CD8-positive, alpha-beta memory T cell (primary cell): ENCODE measurements at regions of chr19 and their contacts with region 1.

Region 1: GRCh38 chr19:55599468-55600279 is at the start of gene FIZ1:
- DNase-seq: peak; percentile 92 to 98 (median 96)
- H3K4me3 ChIP-seq: peak within 1 kb of the TSS; percentile 99
- H3K4me3 Mint-ChIP-seq: peak within 1 kb of the TSS; percentile 95 to 100 (median 98)
- H3K27ac ChIP-seq: peak within 1 kb of the TSS; percentile 91
- H3K27ac Mint-ChIP-seq: peak within 1 kb of the TSS; percentile 91 to 100 (median 98)
- H3K4me1 ChIP-seq: peaks cover 20% of the 10 kb centered on the region
- H3K4me1 Mint-ChIP-seq: peaks cover 21 to 31% (median 28%) of the 10 kb centered on the region in 3 donors
- H3K27me3 ChIP-seq: no peaks in the 10 kb centered on the region
- H3K27me3 Mint-ChIP-seq: peaks cover 0 to 1% of the 10 kb centered on the region in 2 donors
- total RNA-seq, gene FIZ1: 23.9 to 25.8 TPM

Region 2: GRCh38 chr19:55476100-55476775 is 123.4 kb before region 1 on chr19 and contains the start of gene ZNF628:
- CTCF ChIA-PET with region 1: interaction called, 5 read pairs
- POLR2A ChIA-PET with region 1: interaction called, 10 read pairs
- DNase-seq: peak; percentile 95 to 98 (median 97)
- H3K4me3 ChIP-seq: peak within 1 kb of the TSS; percentile 92
- H3K4me3 Mint-ChIP-seq: peak within 1 kb of the TSS; percentile 89 to 96 (median 90)
- H3K27ac ChIP-seq: peak within 1 kb of the TSS; percentile 72
- H3K27ac Mint-ChIP-seq: peak within 1 kb of the TSS; percentile 92 to 99 (median 94)
- H3K4me1 ChIP-seq: peaks cover 17% of the 10 kb centered on the region
- H3K4me1 Mint-ChIP-seq: peaks cover 17 to 42% (median 32%) of the 10 kb centered on the region in 3 donors
- H3K27me3 ChIP-seq: no peaks in the 10 kb centered on the region
- H3K27me3 Mint-ChIP-seq: no peaks in the 10 kb centered on the region
- total RNA-seq, gene ZNF628: 8.3 to 8.7 TPM